ENCODE measurements at regions of chr13 and their contacts with region 1.

Region 1: GRCh38 chr13:97295283-97296182 is 73.4 kb downstream of the MBNL2 start:
- DNase-seq: no peak
- H3K4me3 ChIP-seq: no peak overlapping the region
- H3K27ac ChIP-seq: no peak overlapping the region
- H3K4me1 ChIP-seq: peaks cover 7% of the 10 kb centered on the region
- H3K27me3 ChIP-seq: no peaks in the 10 kb centered on the region
- CTCF ChIP-seq: no peak

Region 2: DNA sequence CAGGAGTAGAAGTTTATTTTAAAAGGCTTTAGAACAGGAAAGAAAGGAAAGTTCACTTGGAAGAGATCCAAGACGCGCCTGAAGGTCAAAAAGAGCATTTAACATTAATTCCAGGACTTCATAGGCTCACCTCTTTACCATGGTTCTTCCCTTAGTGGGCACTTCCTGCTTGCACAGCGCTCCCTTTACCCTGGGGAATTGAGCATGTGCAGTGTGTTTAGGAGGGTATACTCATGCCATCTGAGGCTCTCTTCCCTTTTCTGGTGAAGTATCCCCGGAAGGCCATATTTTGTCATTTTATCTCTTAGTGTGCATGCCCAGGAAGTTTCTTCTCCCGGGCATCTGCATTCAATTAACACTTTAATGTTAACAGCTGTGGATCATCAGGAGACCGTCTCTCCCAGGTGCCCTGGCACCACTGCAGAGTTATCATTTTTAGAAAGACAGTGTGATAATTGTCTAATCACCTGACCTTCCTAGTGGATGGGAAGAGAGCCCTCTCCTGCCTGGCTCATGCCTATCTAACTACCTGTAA is 1928.2 kb before region 1 on chr13:
- CTCF ChIA-PET with region 1: interaction called, 12 read pairs
- POLR2A ChIA-PET with region 1: no interaction called
- intact Hi-C with region 1: no loop called
- DNase-seq: peak; percentile 83
- H3K4me3 ChIP-seq: no peak overlapping the region
- H3K27ac ChIP-seq: no peak overlapping the region
- H3K4me1 ChIP-seq: peaks cover 11% of the 10 kb centered on the region
- H3K27me3 ChIP-seq: no peaks in the 10 kb centered on the region
- CTCF ChIP-seq: no peak

Region 3: DNA sequence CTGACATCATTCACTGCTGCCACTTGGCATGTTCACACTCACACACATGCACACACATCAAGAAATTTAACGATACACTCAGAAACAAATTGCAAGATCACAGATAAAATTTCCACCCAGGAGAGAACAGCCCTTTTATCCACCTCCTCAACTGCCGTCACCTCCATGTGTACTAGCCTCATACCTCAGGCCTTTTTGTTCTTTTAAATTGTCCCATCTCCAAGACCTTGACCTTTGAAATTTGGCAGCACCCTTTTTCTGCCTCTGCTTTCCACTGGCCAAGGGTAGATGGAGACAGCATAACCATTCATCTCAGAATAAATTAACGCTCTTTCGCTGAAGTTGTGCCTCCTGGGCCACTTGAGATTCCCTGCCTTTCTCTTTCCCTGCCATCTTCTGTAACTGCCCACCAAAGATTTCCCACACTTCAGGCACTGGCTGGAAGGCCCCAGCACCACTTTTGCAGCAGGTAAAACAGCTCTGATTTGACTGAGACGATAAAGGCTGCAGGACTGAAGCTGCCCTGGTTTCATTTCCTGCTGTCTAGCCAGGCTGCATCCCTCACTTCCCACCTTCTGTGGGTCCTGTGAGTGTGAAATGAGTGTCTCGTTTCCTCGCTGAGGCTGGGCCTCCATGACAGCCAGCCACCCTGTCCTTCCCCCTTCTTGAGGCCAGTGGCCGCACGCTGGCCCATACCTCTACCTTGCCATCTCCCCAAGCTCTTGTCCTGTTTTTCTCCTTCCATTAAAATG is 34.1 kb before region 1 on chr13:
- CTCF ChIA-PET with region 1: no interaction called
- POLR2A ChIA-PET with region 1: no interaction called
- intact Hi-C with region 1: loop called (anchors 1 kb)
- DNase-seq: no peak
- H3K4me3 ChIP-seq: no peak overlapping the region
- H3K27ac ChIP-seq: no peak overlapping the region
- H3K4me1 ChIP-seq: peaks cover 14% of the 10 kb centered on the region
- H3K27me3 ChIP-seq: no peaks in the 10 kb centered on the region
- CTCF ChIP-seq: no peak

Region 4: GRCh38 chr13:98228661-98229341 is 933.3 kb after region 1 on chr13:
- CTCF ChIA-PET with region 1: no interaction called
- POLR2A ChIA-PET with region 1: no interaction called
- intact Hi-C with region 1: no loop called
- DNase-seq: no peak
- H3K4me3 ChIP-seq: no peak overlapping the region
- H3K27ac ChIP-seq: no peak overlapping the region
- H3K4me1 ChIP-seq: peaks cover 10% of the 10 kb centered on the region
- H3K27me3 ChIP-seq: no peaks in the 10 kb centered on the region
- CTCF ChIP-seq: no peak